ENCODE measurements at regions of chrX and their contacts with region 1.

Region 1: DNA sequence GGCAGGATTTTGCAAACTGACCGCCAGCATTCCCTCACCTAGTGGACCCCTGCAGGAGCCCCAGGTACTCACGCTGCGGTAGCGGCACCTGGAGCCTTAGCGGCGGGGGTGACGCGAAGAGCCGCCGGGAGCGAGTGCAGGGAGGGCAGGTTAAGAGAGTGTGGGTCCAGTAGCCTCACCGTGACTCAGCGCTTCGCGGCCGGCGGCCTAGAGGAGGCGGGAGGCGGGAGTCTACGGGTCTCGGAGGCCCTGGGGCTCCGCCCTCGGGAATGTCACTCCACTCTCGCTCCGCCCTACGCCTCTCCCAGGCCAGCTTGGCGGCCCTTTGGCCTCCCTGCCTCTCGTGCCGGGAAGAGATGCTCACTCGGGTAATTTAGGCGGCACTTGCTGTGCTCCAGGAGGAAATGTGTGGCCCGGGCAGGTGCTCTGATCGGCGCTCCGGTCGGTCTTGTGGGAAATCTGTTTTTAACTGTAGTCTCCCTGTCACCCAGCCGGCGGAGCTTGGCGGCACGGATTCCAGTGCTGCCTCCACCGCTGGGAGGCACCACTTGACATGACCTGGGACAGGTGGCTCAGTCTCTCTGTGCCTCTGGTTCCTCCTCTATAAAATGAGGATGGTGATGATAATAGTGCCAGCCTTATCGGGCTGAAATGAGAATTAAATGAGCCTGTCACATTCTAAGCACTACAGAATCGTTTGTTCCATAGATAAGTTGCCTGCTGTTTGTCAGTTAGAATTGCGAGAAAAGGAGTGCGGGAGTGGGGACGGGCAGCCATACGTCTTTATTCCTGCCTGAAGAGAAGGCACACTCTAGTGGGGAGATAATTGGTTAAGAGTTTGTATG is at the start of gene PIR:
- DNase-seq: peak; percentile 62 to 90 (median 83)
- H3K4me3 ChIP-seq: peak within 1 kb of the TSS; percentile 39 to 77 (median 61)
- H3K27ac ChIP-seq: peak within 1 kb of the TSS in 57 of 59 donors; percentile 15 to 89 (median 75)
- H3K27me3 ChIP-seq: peaks cover 0 to 64% (median 15%) of the 10 kb centered on the region in 45 donors
- CTCF ChIP-seq: peak in 49 of 56 donors; percentile 17 to 69 (median 47)
- total RNA-seq, gene PIR: 9.3 to 41.2 (median 18.7) TPM

Region 2: GRCh38 chrX:15475021-15475420 is 18.3 kb before region 1 on chrX:
- intact Hi-C with region 1: no loop called
- DNase-seq: no peak
- H3K4me3 ChIP-seq: no peak overlapping the region
- H3K27ac ChIP-seq: peak overlapping the region in 1 of 59 donors; percentile 2
- H3K27me3 ChIP-seq: peaks cover 0 to 59% (median 11%) of the 10 kb centered on the region in 45 donors
- CTCF ChIP-seq: no peak

Region 3: GRCh38 chrX:15564981-15565579 is 71.7 kb after region 1 on chrX:
- intact Hi-C with region 1: loop called (anchors 5 kb)
- DNase-seq: peak; percentile 5 to 62 (median 49)
- H3K4me3 ChIP-seq: no peak overlapping the region
- H3K27ac ChIP-seq: no peak overlapping the region
- H3K27me3 ChIP-seq: peaks cover 0 to 83% (median 25%) of the 10 kb centered on the region in 45 donors
- CTCF ChIP-seq: peak in 54 of 56 donors; percentile 34 to 74 (median 55)

Region 4: GRCh38 chrX:15674841-15675489 is 181.6 kb after region 1 on chrX:
- intact Hi-C with region 1: loop called in 1 of 2 experiments (anchors 10 kb)
- DNase-seq: peak; percentile 88 to 95 (median 92)
- H3K4me3 ChIP-seq: peak overlapping the region; percentile 56 to 98 (median 81)
- H3K27ac ChIP-seq: peak overlapping the region; percentile 85 to 99 (median 96)
- H3K27me3 ChIP-seq: peaks cover 0 to 17% (median 0%) of the 10 kb centered on the region in 45 donors
- CTCF ChIP-seq: peak in 6 of 56 donors; percentile 4 to 21 (median 11)

Measured in dorsolateral prefrontal cortex (tissue), 120 donors.